Heart left ventricle (tissue), 16 donors: ENCODE measurements at regions of chr14 and their contacts with region 1.

Region 1: GRCh38 chr14:69363055-69363454 is 35.0 kb downstream of the ERH start:
- DNase-seq: peak in 4 of 5 donors; percentile 39 to 55 (median 48)
- ATAC-seq: peak; percentile 70 to 92 (median 88)
- H3K4me3 ChIP-seq: no peak overlapping the region
- H3K27ac ChIP-seq: no peak overlapping the region
- H3K4me1 ChIP-seq: no peaks in the 10 kb centered on the region
- H3K27me3 ChIP-seq: no peaks in the 10 kb centered on the region
- CTCF ChIP-seq: peak; percentile 31 to 70 (median 54)
- POLR2A ChIP-seq: no peak

Region 2: DNA sequence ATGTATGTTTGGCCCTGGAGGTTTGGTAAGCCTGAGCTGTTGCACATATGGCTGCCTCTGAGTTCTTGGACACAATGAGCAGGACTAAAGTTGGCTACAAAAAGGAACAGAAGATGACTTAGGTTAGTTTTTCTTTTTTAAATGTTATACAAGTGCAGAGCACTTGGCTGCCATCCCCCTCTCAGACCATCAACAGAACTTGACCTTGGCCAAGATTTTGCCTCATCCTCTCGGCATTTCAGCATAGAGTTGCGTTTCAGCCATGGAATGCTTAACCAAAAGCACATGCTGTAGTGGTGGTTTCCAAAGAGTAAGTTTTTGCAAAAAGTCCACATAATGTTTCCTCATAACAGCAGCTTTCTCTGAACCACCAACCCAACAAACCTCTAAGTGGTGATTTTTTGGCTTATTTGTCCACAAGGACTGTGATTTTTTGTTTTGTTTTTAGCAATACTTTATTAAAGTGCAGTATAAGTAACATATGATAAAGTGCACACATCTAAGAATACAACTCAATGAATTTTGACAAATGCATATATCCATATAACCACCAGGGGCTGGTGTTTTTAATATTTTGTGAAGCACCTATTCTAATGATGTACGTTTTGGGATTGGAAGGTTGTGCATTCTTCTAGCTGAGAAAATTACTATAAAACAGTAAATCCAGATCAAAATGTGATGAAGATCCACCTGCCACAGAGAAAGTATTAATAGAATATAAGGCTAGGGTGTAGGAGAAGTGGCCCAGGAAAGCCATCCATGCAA is 115.2 kb before region 1 on chr14:
- intact Hi-C with region 1: loop called in 7 of 10 experiments (anchors 2 to 5 kb)
- DNase-seq: peak in 1 of 5 donors; percentile 63
- ATAC-seq: peak in 3 of 4 donors; percentile 62 to 79 (median 77)
- H3K4me3 ChIP-seq: no peak overlapping the region
- H3K27ac ChIP-seq: peak overlapping the region in 4 of 12 donors; percentile 25 to 61 (median 40)
- H3K4me1 ChIP-seq: peaks cover 0 to 22% (median 4%) of the 10 kb centered on the region in 12 donors
- H3K27me3 ChIP-seq: no peaks in the 10 kb centered on the region
- CTCF ChIP-seq: peak in 7 of 12 donors; percentile 9 to 30 (median 23)
- POLR2A ChIP-seq: no peak